SK-N-SH (cell line): ENCODE measurements at regions of chr16 and their contacts with region 1.

Region 1: GRCh38 chr16:3023669-3024478 is at the starts of genes HCFC1R1 and THOC6:
- DNase-seq: peak; percentile 92
- H3K4me3 ChIP-seq: peak within 1 kb of the TSS; percentile 80 to 88
- H3K27ac ChIP-seq: peak within 1 kb of the TSS; percentile 94 to 99
- H3K4me1 ChIP-seq: peaks cover 8 to 30% of the 10 kb centered on the region in 2 experiments; a peak in 3 of 4 replicates
- H3K27me3 ChIP-seq: no peaks in the 10 kb centered on the region
- CTCF ChIP-seq: no peak
- EP300 ChIP-seq: no peak; a peak in 1 of 4 replicates
- RAD21 ChIP-seq: no peak
- polyA plus RNA-seq, gene HCFC1R1: 34.7 and 54.9 TPM in 2 replicates
- polyA plus RNA-seq, gene THOC6: 35.7 and 37.7 TPM in 2 replicates

Region 2: DNA sequence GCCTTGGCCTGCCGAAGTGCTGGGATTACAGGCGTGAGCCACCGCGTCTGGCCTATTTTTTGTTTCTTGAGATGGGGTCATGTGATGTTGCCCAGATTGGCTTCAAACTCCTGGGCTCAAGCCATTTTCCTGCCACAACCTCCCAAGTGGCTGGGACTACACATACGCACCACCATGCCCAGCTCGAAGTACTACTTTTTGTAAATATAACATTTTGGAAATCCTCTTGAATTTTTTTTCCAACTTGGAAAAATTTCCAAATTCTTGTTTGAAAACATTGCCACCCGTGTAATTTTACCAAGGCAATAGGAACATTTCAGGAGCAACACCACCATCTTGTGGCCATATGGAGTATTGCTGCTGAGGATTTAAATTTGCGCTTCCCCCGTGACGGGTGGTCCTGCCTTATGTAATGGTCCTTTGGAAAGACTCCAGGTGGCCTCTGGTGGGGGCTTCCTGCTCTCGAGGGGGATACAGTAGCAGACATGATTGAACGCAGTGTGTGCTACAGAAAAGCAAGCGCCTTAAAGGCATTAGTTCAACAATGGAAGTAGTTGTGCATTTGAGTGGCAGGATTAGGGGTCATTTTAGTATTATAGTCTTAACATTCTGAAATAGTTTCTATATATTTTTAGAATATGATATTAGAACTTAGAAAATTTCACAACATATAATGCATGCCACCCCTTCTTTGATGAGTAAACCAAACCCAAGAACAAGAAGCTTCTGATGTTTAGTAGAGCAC is 104.2 kb before region 1 on chr16:
- CTCF ChIA-PET with region 1: no interaction called
- POLR2A ChIA-PET with region 1: no interaction called
- DNase-seq: peak; percentile 84
- H3K4me3 ChIP-seq: peak overlapping the region in 1 of 2 experiments; percentile 38; a peak in 1 of 4 replicates
- H3K27ac ChIP-seq: peak overlapping the region in 1 of 2 experiments; percentile 46; a peak in 2 of 4 replicates
- H3K4me1 ChIP-seq: peaks cover 0 to 17% of the 10 kb centered on the region in 2 experiments; a peak in 3 of 4 replicates
- H3K27me3 ChIP-seq: no peaks in the 10 kb centered on the region
- CTCF ChIP-seq: peak; percentile 93
- EP300 ChIP-seq: no peak
- RAD21 ChIP-seq: peak; percentile 86

Region 3: DNA sequence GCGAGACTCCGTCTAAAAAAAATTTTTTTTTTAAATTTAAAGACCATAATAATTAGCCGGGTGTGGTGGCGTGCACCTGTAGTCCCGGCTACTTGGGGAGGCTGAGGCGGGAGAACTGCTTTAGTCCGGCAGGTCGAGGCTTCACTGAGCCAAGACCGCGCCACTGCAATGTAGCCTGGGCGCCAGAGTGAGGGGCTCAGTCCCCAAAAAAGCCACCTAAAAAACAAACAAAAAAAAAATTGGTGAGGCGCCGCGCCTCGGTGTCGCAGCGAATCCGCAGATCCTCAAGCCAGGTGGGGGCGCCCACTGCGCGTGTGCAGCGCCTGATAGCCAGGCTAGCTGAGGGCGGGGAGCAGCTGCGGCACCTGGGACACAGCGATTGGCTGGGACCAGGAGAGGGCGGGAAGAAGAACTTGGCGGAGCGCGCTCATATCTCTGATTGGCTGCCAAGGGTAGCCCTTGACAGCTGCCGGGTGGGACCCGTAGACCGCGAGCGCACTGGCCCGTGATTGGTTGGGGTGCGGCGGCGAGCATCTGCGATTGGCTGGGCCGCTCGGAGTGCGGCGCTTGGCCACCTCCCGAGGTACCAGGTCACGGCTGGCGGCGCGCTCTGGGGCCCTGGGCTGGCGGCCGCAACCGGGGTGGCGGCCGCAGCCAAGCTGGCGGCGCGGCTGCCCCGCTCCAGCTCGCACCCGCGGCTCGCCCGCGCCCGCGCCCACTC is 20.1 kb before region 1 on chr16:
- CTCF ChIA-PET with region 1: interaction called, 72 read pairs
- POLR2A ChIA-PET with region 1: interaction called, 8 read pairs
- DNase-seq: peak; percentile 99
- H3K4me3 ChIP-seq: peak overlapping the region; percentile 26 to 47; a peak in 2 of 4 replicates
- H3K27ac ChIP-seq: no peak overlapping the region
- H3K4me1 ChIP-seq: peaks cover 0 to 3% of the 10 kb centered on the region in 2 experiments; a peak in 1 of 4 replicates
- H3K27me3 ChIP-seq: no peaks in the 10 kb centered on the region
- CTCF ChIP-seq: peak; percentile 51
- EP300 ChIP-seq: no peak
- RAD21 ChIP-seq: peak; percentile 75

Region 4: DNA sequence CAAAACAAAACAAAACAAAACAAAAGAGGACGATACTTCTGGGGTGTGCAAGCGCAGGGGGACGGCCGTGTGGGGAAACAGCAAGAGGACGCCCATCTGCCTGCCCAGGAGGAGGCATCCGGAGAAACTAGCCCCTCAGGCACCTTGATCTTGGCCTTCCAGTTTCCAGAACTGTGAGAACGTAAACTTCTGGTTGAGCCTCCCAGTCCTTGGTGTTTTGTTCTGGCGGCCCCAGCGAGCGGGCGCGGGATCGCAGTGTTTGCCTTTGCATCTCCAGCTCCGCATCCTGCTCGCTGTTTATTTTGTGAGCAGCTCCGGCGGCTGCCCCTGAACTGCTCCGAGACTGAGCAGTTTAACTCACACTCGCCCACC is 21.5 kb after region 1 on chr16:
- CTCF ChIA-PET with region 1: interaction called, 141 read pairs
- POLR2A ChIA-PET with region 1: interaction called, 4 read pairs
- DNase-seq: no peak
- H3K4me3 ChIP-seq: peak overlapping the region; percentile 33; a peak in 3 of 4 replicates
- H3K27ac ChIP-seq: no peak overlapping the region
- H3K4me1 ChIP-seq: no peaks in the 10 kb centered on the region; a peak in 1 of 4 replicates
- H3K27me3 ChIP-seq: peaks cover 78% of the 10 kb centered on the region
- CTCF ChIP-seq: no peak
- EP300 ChIP-seq: no peak
- RAD21 ChIP-seq: no peak

Region 5: DNA sequence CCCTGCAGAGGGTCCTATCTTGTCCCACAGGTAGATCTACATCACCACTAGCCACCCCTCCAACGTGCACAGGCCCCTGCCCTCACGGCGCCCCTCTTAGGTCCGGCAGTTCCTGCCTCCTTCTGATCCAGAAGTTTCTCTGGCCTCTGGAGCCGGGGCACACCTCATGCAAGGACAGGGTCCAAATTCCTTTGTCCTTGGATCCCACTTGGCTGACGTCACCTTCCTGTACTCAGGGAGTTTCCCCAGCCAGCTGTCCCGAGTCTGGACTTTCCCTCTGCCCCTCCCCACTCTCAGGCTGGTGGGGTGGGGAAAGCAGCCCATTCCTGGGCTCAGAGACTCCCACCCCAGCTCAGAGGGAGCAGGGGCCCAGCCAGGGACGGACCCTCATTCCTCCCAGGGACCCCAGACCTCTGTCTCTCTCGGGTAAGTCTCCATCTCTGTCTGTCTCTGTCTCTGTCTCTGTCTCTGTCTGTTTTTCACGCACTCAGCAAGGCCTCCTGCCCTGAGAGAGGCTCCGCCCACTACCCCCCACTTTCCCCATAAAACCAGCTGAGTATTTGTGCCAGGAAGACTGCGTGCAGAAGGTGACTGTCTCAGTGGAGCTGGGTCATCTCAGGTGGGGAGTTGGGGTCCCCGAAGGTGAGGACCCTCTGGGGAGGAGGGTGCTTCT is 41.3 kb after region 1 on chr16 and contains the start of gene IL32:
- CTCF ChIA-PET with region 1: interaction called, 63 read pairs
- POLR2A ChIA-PET with region 1: no interaction called
- DNase-seq: no peak
- H3K4me3 ChIP-seq: peak within 1 kb of the TSS in 1 of 2 experiments; percentile 50; a peak in 1 of 4 replicates
- H3K27ac ChIP-seq: no peak within 1 kb of the TSS
- H3K4me1 ChIP-seq: no peaks in the 10 kb centered on the region; a peak in 1 of 4 replicates
- H3K27me3 ChIP-seq: no peaks in the 10 kb centered on the region
- CTCF ChIP-seq: no peak
- EP300 ChIP-seq: no peak
- RAD21 ChIP-seq: no peak
- polyA plus RNA-seq, gene IL32: 26.4 and 34.7 TPM in 2 replicates